Endothelial cell of umbilical vein (primary cell): ENCODE measurements at regions of chr5 and their contacts with region 1.

Region 1: DNA sequence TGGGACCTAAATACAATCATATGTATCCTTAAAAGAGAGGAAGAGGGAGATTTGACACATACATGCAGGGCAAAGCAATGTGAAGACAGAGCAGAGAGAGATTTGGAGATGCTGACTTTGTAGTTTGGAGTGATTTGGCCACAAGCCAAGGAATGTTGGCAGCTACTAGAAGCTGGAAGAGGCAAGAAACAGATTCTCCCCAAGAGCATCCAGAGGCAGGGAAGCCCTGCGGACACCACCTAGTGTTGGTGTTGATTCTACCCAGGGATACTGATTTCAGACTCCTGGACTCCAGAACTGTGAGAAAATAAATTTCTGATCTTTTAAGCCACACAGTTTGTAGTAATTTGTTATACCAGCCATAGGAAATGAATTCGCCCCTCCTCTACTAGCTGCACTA is 64.9 kb upstream of the OSMR start:
- DNase-seq: peak; percentile 62
- H3K4me3 ChIP-seq: no peak overlapping the region
- H3K27ac ChIP-seq: no peak overlapping the region
- H3K4me1 ChIP-seq: peaks cover 29% of the 10 kb centered on the region
- H3K27me3 ChIP-seq: peaks cover 0 to 8% of the 10 kb centered on the region in 2 experiments
- CTCF ChIP-seq: peak in 1 of 2 donors; percentile 10
- POLR2A ChIP-seq: no peak

Region 2: GRCh38 chr5:38404667-38405276 is 376.2 kb before region 1 on chr5:
- CTCF ChIA-PET with region 1: no interaction called
- POLR2A ChIA-PET with region 1: no interaction called
- dilution Hi-C with region 1: no loop called
- intact Hi-C with region 1: no loop called
- DNase-seq: no peak
- H3K4me3 ChIP-seq: no peak overlapping the region
- H3K27ac ChIP-seq: no peak overlapping the region
- H3K4me1 ChIP-seq: peaks cover 25% of the 10 kb centered on the region
- H3K27me3 ChIP-seq: peaks cover 0 to 3% of the 10 kb centered on the region in 2 experiments
- CTCF ChIP-seq: no peak
- POLR2A ChIP-seq: no peak

Region 3: DNA sequence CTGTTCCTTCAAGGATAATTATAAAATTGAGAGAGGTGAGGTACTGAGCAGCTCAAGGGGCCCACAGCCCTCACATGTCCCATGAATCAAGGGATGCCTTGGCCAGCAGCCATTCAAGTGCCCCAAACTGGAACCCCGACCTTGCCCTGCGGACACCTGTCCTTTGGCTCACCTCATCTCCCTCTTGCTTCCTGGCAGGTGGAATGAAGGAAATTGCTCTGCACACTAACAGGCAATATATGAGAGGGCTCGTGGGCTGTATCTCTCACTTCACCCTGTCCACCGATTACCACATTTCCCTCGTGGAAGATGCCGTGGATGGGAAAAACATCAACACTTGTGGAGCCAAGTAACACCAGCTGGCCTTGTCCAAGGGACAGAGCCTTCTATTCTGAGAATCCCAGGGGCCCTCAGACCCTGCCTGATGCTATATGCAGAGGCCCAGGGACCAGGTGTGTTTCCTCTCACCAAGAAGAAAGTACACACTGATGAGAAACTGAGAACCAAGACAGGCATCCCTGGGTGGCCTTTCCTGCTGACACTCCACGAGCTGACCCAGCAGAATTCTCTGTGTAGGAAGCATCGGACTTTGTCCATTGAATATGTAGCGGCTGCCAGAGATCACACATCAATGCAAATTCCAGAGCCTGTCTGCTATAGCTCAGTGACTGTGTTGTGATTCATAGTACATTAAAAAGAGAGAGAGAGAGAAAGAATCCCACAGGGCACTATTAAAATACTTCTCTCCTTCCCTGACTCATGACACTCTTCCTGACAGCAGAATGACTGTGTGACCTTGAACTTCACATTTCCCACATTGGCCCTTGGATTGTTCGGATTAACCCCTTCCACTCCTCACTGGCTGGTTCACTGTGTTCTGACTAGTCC is 317.1 kb before region 1 on chr5:
- CTCF ChIA-PET with region 1: interaction called, 8 read pairs
- POLR2A ChIA-PET with region 1: interaction called, 4 read pairs
- dilution Hi-C with region 1: no loop called
- intact Hi-C with region 1: loop called (anchors 2 kb)
- DNase-seq: peak; percentile 89
- H3K4me3 ChIP-seq: no peak overlapping the region
- H3K27ac ChIP-seq: peak overlapping the region; percentile 90
- H3K4me1 ChIP-seq: peaks cover 64% of the 10 kb centered on the region
- H3K27me3 ChIP-seq: no peaks in the 10 kb centered on the region
- CTCF ChIP-seq: no peak
- POLR2A ChIP-seq: peak; percentile 73

Region 4: GRCh38 chr5:38556599-38557305 is 224.2 kb before region 1 on chr5 and contains the start of gene LIFR:
- CTCF ChIA-PET with region 1: no interaction called
- POLR2A ChIA-PET with region 1: no interaction called
- dilution Hi-C with region 1: no loop called
- intact Hi-C with region 1: loop called (anchors 1 kb)
- DNase-seq: peak; percentile 80
- H3K4me3 ChIP-seq: peak within 1 kb of the TSS; percentile 82 to 86 (median 83)
- H3K27ac ChIP-seq: peak within 1 kb of the TSS; percentile 68
- H3K4me1 ChIP-seq: peaks cover 21% of the 10 kb centered on the region
- H3K27me3 ChIP-seq: peaks cover 0 to 2% of the 10 kb centered on the region in 2 experiments
- CTCF ChIP-seq: peak in 1 of 2 donors; percentile 3
- POLR2A ChIP-seq: peak; percentile 66
- total RNA-seq, gene LIFR: 34.9 and 36.4 TPM in 2 replicates

Region 5: DNA sequence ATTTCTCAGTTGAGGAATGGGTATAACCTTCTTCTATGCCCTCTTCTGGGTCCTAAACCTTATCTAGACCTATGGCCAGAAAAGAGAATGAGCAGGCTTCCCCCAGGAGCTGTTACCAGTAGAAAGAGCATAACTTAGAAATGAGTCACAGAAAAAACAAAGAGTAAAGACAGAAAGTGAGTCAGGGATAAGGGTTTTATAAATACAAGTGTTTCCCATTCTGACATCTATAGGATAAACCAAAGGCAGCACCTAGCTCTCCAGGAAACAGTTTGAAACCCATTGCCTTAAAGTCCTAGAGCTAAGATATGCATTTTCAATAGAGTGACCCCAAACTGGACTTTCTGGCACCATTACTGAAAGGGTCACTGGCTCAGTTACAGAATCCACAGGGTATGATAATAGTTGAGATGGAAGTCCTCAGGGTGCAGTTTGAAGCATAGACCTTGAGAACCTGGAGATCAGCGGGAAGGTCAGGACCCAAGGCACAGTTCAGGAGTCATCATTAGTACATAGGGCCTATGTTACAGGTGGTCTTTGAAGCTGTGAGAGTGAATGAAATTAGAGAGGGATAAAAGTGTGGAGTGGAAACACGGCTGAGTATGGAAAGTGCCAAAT is 181.8 kb before region 1 on chr5:
- CTCF ChIA-PET with region 1: interaction called, 5 read pairs
- POLR2A ChIA-PET with region 1: no interaction called
- dilution Hi-C with region 1: no loop called
- intact Hi-C with region 1: loop called (anchors 5 kb)
- DNase-seq: peak; percentile 87
- H3K4me3 ChIP-seq: no peak overlapping the region
- H3K27ac ChIP-seq: peak overlapping the region; percentile 66
- H3K4me1 ChIP-seq: peaks cover 59% of the 10 kb centered on the region
- H3K27me3 ChIP-seq: no peaks in the 10 kb centered on the region
- CTCF ChIP-seq: no peak
- POLR2A ChIP-seq: no peak

Region 6: DNA sequence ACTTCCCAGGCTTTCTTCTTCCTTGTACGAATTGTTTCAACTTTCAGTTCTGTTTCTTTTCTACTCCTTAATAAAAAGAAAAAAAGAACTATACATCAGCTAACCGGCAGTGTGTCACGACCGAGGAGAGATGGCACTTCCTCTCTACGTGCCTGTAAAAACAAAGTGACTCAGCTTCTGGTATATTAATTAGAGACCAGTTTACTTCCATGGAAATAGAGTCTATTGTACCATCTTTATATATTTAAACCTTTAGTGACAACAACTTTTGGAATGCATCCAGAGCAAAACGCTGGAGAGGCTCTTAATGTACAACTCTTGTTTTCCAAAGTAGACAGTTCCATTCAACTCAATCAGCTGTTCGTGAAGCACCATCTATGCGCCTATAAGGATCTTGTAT is 130.0 kb before region 1 on chr5:
- CTCF ChIA-PET with region 1: interaction called, 6 read pairs
- POLR2A ChIA-PET with region 1: no interaction called
- dilution Hi-C with region 1: no loop called
- intact Hi-C with region 1: loop called (anchors 1 kb)
- DNase-seq: peak; percentile 92
- H3K4me3 ChIP-seq: peak overlapping the region in 1 of 3 experiments; percentile 28
- H3K27ac ChIP-seq: peak overlapping the region; percentile 44
- H3K4me1 ChIP-seq: peaks cover 12% of the 10 kb centered on the region
- H3K27me3 ChIP-seq: peaks cover 0 to 2% of the 10 kb centered on the region in 2 experiments
- CTCF ChIP-seq: no peak
- POLR2A ChIP-seq: no peak

Region 7: GRCh38 chr5:38719916-38720315 is 61.0 kb before region 1 on chr5:
- CTCF ChIA-PET with region 1: no interaction called
- POLR2A ChIA-PET with region 1: no interaction called
- dilution Hi-C with region 1: no loop called
- intact Hi-C with region 1: loop called (anchors 5 kb)
- DNase-seq: no peak
- H3K4me3 ChIP-seq: no peak overlapping the region
- H3K27ac ChIP-seq: no peak overlapping the region
- H3K4me1 ChIP-seq: no peaks in the 10 kb centered on the region
- H3K27me3 ChIP-seq: peaks cover 0 to 2% of the 10 kb centered on the region in 2 experiments
- CTCF ChIP-seq: no peak
- POLR2A ChIP-seq: no peak

Region 8: DNA sequence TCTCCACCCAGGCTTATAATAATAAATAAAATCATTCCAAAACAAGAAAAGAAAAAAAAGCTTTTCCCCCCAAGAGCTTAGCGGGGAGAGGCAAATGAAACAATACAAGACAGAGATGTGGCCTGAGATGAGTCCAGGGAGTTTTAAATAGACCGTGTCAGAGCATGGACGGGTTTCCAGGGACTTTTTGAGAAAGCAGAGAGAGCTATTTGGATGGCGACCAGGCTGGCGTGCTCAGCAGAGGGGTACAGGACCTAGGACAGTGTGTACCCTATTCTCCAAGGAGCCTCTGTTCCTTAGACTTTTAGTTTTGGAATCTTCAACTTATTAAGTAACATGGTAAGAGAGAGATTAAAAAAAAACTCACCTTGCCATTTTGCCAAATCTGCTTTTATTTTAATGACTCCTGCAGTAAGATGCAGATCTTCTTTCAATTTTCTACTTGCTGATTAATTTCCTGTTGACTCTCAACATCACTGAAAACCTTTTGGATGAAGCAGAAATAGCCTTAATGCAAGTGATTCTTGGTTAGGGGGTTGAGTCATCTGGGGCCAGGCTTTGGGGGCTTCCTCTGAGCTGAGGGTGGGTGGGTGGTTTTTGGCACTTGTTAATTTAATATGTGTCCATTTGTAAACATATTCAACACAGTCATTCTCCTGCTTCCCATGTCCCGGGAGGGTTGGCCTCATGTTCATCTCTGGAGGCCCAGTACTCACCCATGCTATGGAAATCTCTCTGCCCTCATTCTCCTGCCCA is 15.2 kb after region 1 on chr5:
- CTCF ChIA-PET with region 1: interaction called, 11 read pairs
- POLR2A ChIA-PET with region 1: no interaction called
- dilution Hi-C with region 1: no loop called
- intact Hi-C with region 1: no loop called
- DNase-seq: peak; percentile 79
- H3K4me3 ChIP-seq: peak overlapping the region in 1 of 3 experiments; percentile 22
- H3K27ac ChIP-seq: peak overlapping the region; percentile 37
- H3K4me1 ChIP-seq: peaks cover 15% of the 10 kb centered on the region
- H3K27me3 ChIP-seq: no peaks in the 10 kb centered on the region
- CTCF ChIP-seq: no peak
- POLR2A ChIP-seq: no peak